GM12878 (cell line): ENCODE measurements at regions of chr2 and their contacts with region 1.

Region 1: DNA sequence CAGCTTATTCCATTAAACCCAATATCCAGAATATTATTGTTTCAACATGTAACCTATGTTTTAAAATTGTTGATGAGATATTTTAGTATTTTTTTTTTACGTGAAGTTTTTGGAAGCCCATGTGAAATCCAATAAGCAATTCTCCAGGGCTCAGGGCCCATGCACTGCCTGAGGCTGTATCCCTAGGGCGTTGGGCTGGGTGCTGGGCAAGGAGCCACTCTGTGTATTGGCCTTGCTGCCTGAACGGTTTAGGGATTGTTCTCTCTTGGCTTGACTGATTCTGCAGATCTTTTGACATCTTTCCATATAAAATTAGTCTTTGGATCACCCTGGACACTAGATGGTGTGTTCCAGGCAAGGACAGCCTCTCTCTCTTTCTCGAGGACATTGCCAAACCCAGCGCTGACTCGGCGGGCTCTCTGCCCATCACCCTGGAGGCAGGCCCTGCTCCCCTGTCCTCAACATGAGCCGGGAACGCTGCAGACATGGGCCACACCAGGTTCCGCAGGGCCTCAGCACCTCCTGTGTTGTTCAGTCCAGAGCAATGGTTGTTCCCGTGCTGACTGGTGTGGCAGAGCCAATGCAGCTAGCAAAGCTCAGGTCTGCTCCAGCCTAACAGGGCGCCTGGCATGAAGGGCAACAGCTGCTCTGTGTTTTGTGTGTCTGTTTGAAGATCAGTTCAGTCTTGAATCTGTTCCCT is 163.0 kb downstream of the SEPTIN10 start:
- DNase-seq: no peak
- ATAC-seq: no peak
- H3K4me3 ChIP-seq: no peak overlapping the region
- H3K27ac ChIP-seq: no peak overlapping the region
- H3K4me1 ChIP-seq: no peaks in the 10 kb centered on the region
- H3K27me3 ChIP-seq: no peaks in the 10 kb centered on the region
- CTCF ChIP-seq: no peak
- EP300 ChIP-seq: no peak
- POLR2A ChIP-seq: no peak
- RAD21 ChIP-seq: no peak

Region 2: DNA sequence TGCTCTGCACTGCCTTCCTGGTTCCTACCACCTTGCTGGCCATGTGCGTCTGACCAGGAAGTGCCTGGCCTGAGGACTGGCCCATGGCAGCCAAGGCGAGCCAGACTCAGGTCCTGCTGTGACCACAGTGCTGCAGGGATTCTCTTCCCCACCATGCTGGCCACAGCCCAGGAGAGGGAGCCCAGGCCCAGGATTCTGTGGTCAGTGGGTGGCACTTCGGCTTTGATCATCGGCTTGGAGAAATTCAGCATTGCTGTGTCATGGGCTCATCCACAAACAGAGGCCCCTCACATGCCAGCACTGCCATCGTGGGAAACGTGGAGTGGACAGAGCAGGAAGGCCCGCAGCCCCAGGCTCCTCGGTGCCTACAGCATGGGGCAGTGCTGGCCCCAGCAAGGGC is 48.5 kb before region 1 on chr2:
- CTCF ChIA-PET with region 1: no interaction called
- POLR2A ChIA-PET with region 1: no interaction called
- RAD21 ChIA-PET with region 1: no interaction called
- SMC1A ChIA-PET with region 1: no interaction called
- in situ Hi-C with region 1: loop called (anchors 5 kb)
- intact Hi-C with region 1: no loop called
- DNase-seq: no peak
- ATAC-seq: no peak
- H3K4me3 ChIP-seq: no peak overlapping the region
- H3K27ac ChIP-seq: no peak overlapping the region
- H3K4me1 ChIP-seq: no peaks in the 10 kb centered on the region; the same call in none of the 2 replicates
- H3K27me3 ChIP-seq: no peaks in the 10 kb centered on the region
- CTCF ChIP-seq: no peak
- EP300 ChIP-seq: no peak
- POLR2A ChIP-seq: no peak
- RAD21 ChIP-seq: no peak